IMR-90 (cell line): ENCODE measurements at regions of chr5 and their contacts with region 1.

Region 1: DNA sequence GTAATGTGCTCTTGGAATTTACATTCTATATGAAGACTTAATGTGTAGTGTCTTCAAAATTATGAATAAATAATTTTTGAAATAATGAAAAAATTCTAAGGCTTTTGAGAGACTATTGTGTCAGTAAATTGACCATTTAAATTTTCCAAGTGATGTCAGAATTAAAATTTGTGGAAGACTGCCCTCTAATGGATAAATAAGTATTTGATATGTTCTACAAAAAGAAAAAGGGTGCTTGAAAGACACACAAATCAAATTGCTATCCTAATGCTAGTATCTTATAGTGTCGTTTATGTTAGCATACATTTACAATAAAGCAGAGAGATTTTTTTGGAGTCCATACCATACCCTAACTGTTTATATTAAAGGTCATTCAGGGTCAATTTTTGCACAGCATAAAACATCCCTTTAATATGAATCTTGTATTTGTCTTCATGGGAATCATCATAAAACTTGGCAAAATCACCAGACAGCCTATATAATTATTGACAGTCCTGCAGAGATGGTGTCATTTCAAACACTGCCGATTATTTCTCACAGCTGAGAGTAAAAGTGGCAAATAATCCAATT is 120.8 kb upstream of the SLC27A6 start:
- DNase-seq: peak; percentile 28
- ATAC-seq: no peak
- H3K4me3 ChIP-seq: no peak overlapping the region
- H3K27ac ChIP-seq: no peak overlapping the region
- H3K4me1 ChIP-seq: no peaks in the 10 kb centered on the region
- H3K27me3 ChIP-seq: no peaks in the 10 kb centered on the region
- CTCF ChIP-seq: peak; percentile 51
- POLR2A ChIP-seq: no peak
- RAD21 ChIP-seq: peak; percentile 54

Region 2: GRCh38 chr5:128213340-128213739 is 631.1 kb before region 1 on chr5:
- CTCF ChIA-PET with region 1: no interaction called
- POLR2A ChIA-PET with region 1: no interaction called
- dilution Hi-C with region 1: no loop called
- in situ Hi-C with region 1: loop called (anchors 10 kb)
- intact Hi-C with region 1: loop called (anchors 1 kb)
- DNase-seq: peak; percentile 77
- ATAC-seq: peak; percentile 68
- H3K4me3 ChIP-seq: no peak overlapping the region
- H3K27ac ChIP-seq: no peak overlapping the region
- H3K4me1 ChIP-seq: peaks cover 3% of the 10 kb centered on the region; the same call in 1 of the 2 replicates
- H3K27me3 ChIP-seq: no peaks in the 10 kb centered on the region
- CTCF ChIP-seq: peak; percentile 92
- POLR2A ChIP-seq: 0 out of 2 replicates have a peak, but pooled peaks have one; percentile 38
- RAD21 ChIP-seq: peak; percentile 93

Region 3: DNA sequence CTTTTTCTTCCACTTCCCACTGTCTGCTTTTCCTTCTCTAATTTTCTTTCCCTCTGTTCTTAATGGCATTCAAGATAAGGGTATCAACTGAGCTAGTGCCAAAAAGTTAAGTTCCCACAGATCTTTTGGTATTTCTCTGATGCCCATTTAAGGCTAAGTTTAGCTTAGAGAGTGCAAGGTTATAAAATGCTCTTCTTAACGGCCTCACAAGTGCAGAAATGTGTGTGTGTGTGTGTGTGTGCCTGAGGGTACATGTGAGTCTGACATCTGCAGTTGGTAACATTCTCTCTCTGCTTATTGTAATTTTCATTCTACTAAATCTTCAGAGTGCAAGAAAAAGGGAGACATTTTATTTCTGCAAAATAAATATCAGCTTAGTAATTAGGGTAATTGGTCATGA is 330.6 kb before region 1 on chr5:
- CTCF ChIA-PET with region 1: no interaction called
- POLR2A ChIA-PET with region 1: no interaction called
- dilution Hi-C with region 1: no loop called
- in situ Hi-C with region 1: loop called (anchors 25 kb)
- intact Hi-C with region 1: no loop called
- DNase-seq: peak; percentile 9
- ATAC-seq: peak; percentile 53
- H3K4me3 ChIP-seq: no peak overlapping the region
- H3K27ac ChIP-seq: no peak overlapping the region
- H3K4me1 ChIP-seq: no peaks in the 10 kb centered on the region; the same call in 1 of the 2 replicates
- H3K27me3 ChIP-seq: no peaks in the 10 kb centered on the region
- CTCF ChIP-seq: no peak
- POLR2A ChIP-seq: no peak
- RAD21 ChIP-seq: no peak

Region 4: DNA sequence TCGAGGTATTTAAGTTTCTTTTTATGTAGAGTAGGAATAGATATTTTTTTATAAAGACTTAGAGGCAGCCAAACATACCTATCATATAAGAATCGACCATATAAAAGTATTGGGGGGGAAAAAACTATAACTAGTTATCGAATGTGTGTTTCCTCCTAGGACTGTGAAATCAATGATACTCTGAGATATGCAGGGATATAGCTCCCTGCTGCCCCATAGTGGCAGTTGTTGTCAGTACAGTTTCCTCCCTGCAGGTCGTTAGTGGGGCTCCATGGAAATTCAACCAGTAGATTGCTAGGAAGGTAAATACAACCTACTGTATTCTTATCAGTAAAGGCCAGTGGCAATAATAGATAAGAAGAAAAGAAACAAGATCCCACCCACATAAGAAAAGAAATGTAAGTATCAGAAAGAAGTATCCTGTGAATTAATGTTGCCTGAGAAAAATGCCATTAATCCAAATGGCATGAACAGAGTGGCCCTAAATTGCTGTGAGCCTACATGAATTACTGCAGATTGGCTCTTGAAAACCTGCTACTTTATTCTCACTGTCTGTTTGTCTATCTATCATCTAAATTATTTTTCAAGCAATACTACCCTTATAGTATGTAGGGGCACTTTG is 169.5 kb before region 1 on chr5:
- CTCF ChIA-PET with region 1: interaction called, 3 read pairs
- POLR2A ChIA-PET with region 1: no interaction called
- dilution Hi-C with region 1: no loop called
- in situ Hi-C with region 1: no loop called
- intact Hi-C with region 1: loop called (anchors 5 kb)
- DNase-seq: peak; percentile 57
- ATAC-seq: peak; percentile 95
- H3K4me3 ChIP-seq: no peak overlapping the region
- H3K27ac ChIP-seq: no peak overlapping the region
- H3K4me1 ChIP-seq: no peaks in the 10 kb centered on the region; the same call in 1 of the 2 replicates
- H3K27me3 ChIP-seq: no peaks in the 10 kb centered on the region; the same call in 1 of the 2 replicates
- CTCF ChIP-seq: peak; percentile 83
- POLR2A ChIP-seq: no peak
- RAD21 ChIP-seq: peak; percentile 87

Region 5: GRCh38 chr5:128706269-128706668 is 138.2 kb before region 1 on chr5:
- CTCF ChIA-PET with region 1: no interaction called
- POLR2A ChIA-PET with region 1: no interaction called
- dilution Hi-C with region 1: no loop called
- in situ Hi-C with region 1: no loop called
- intact Hi-C with region 1: no loop called
- DNase-seq: no peak
- ATAC-seq: no peak
- H3K4me3 ChIP-seq: no peak overlapping the region
- H3K27ac ChIP-seq: no peak overlapping the region
- H3K4me1 ChIP-seq: no peaks in the 10 kb centered on the region
- H3K27me3 ChIP-seq: no peaks in the 10 kb centered on the region
- CTCF ChIP-seq: no peak
- POLR2A ChIP-seq: no peak
- RAD21 ChIP-seq: no peak